K562 (cell line): ENCODE measurements at regions of chr3 and their contacts with region 1.

Region 1: DNA sequence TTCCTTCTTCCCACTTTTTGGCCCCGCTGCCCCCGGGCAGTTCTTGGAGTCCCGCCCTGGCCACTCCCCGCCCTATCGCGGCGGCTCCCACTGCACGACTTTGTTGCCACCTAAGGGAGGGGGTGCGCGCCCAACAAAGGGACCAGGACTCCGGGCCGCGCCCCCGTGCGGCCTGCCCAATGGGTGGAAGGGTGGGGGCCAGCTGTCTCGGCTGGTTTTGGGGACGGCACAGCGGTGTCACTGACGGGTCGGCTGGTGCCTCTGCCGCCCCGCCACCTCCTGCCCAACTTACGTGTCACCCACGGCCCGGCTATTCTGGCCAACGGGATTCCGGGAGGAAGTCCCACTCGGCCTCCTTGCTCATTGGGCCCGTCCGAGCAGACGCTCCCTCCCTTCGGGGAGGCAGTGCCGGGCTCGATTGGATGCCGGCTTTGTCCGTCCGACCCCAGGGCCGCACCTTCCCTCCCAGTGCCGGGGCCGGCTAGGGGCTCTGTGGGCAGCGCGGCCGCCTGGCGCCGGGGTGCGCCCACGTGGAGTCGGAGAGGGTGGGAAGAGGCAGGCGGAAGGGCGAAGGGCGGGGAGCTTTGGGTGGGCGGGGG is at the start of gene GOLIM4:
- DNase-seq: peak; percentile 90 to 96 (median 92)
- ATAC-seq: peak; percentile 91
- H3K4me3 ChIP-seq: peak within 1 kb of the TSS; percentile 77
- H3K27ac ChIP-seq: peak within 1 kb of the TSS; percentile 96
- H3K4me1 ChIP-seq: peaks cover 13 to 31% of the 10 kb centered on the region in 2 experiments
- H3K27me3 ChIP-seq: no peaks in the 10 kb centered on the region
- CTCF ChIP-seq: peak in 2 of 3 experiments; percentile 22 to 30; a peak in 3 of 6 replicates
- EP300 ChIP-seq: no peak
- POLR2A ChIP-seq: peak; percentile 70
- RAD21 ChIP-seq: peak; percentile 14 to 16; a peak in 1 of 4 replicates
- polyA plus RNA-seq, gene GOLIM4: 11.3 to 12.0 TPM

Region 2: GRCh38 chr3:167669699-167670098 is 426.0 kb before region 1 on chr3:
- CTCF ChIA-PET with region 1: no interaction called
- POLR2A ChIA-PET with region 1: no interaction called
- in situ Hi-C with region 1: no loop called
- intact Hi-C with region 1: no loop called
- DNase-seq: no peak
- ATAC-seq: peak; percentile 16
- H3K4me3 ChIP-seq: no peak overlapping the region
- H3K27ac ChIP-seq: no peak overlapping the region
- H3K4me1 ChIP-seq: no peaks in the 10 kb centered on the region
- H3K27me3 ChIP-seq: no peaks in the 10 kb centered on the region
- CTCF ChIP-seq: no peak
- EP300 ChIP-seq: no peak
- POLR2A ChIP-seq: peak; percentile 60
- RAD21 ChIP-seq: no peak

Region 3: GRCh38 chr3:168047190-168047795 is 48.4 kb before region 1 on chr3:
- CTCF ChIA-PET with region 1: no interaction called
- POLR2A ChIA-PET with region 1: no interaction called
- in situ Hi-C with region 1: no loop called
- intact Hi-C with region 1: loop called (anchors 1 kb)
- DNase-seq: peak; percentile 34 to 77 (median 50)
- ATAC-seq: peak; percentile 91
- H3K4me3 ChIP-seq: no peak overlapping the region
- H3K27ac ChIP-seq: no peak overlapping the region
- H3K4me1 ChIP-seq: no peaks in the 10 kb centered on the region
- H3K27me3 ChIP-seq: no peaks in the 10 kb centered on the region
- CTCF ChIP-seq: peak; percentile 73 to 99 (median 95)
- EP300 ChIP-seq: no peak
- POLR2A ChIP-seq: no peak
- RAD21 ChIP-seq: peak; percentile 99

Region 4: DNA sequence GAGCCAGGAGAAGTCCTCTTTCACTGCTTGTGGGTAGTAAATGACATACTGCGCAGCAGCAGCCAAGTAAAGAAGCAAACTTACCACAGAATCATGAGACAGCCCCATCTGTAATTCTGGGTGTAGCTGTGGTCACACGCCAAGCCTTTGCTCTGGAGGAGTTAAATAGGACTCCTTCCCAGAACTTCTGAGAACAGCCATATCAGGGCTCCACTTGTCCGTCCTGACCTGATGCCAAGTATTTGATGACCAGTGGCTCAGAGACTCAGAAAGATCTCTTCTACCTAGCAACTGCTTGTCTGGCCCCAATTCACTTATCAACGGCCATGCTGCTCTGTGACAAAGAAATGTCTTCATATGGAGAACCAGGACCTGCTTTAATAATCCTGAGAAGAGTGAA is 20.6 kb after region 1 on chr3:
- CTCF ChIA-PET with region 1: no interaction called
- POLR2A ChIA-PET with region 1: interaction called, 4 read pairs
- in situ Hi-C with region 1: no loop called
- intact Hi-C with region 1: loop called (anchors 1 kb)
- DNase-seq: peak; percentile 38 to 94 (median 65)
- ATAC-seq: peak; percentile 94
- H3K4me3 ChIP-seq: no peak overlapping the region; the same call in 1 of the 2 replicates
- H3K27ac ChIP-seq: peak overlapping the region; percentile 73
- H3K4me1 ChIP-seq: peaks cover 0 to 34% of the 10 kb centered on the region in 2 experiments; a peak in 3 of 5 replicates
- H3K27me3 ChIP-seq: no peaks in the 10 kb centered on the region
- CTCF ChIP-seq: peak in 1 of 3 experiments; percentile 5; a peak in 1 of 6 replicates
- EP300 ChIP-seq: peak; percentile 39; the same call in 1 of the 2 replicates
- POLR2A ChIP-seq: no peak
- RAD21 ChIP-seq: peak; percentile 25 to 28

Region 5: GRCh38 chr3:168156479-168156878 is 60.8 kb after region 1 on chr3:
- CTCF ChIA-PET with region 1: no interaction called
- POLR2A ChIA-PET with region 1: no interaction called
- in situ Hi-C with region 1: no loop called
- intact Hi-C with region 1: loop called (anchors 1 kb)
- DNase-seq: no peak
- ATAC-seq: no peak
- H3K4me3 ChIP-seq: no peak overlapping the region
- H3K27ac ChIP-seq: peak overlapping the region; percentile 79
- H3K4me1 ChIP-seq: peaks cover 12 to 35% of the 10 kb centered on the region in 2 experiments
- H3K27me3 ChIP-seq: no peaks in the 10 kb centered on the region
- CTCF ChIP-seq: no peak
- EP300 ChIP-seq: no peak
- POLR2A ChIP-seq: no peak
- RAD21 ChIP-seq: no peak